ENCODE measurements at regions of chr6 and their contacts with region 1.

Region 1: GRCh38 chr6:14144678-14145113 is 27.1 kb downstream of the CD83 start:
- DNase-seq: peak; percentile 45 to 76 (median 62)
- ATAC-seq: peak; percentile 91
- H3K4me3 ChIP-seq: no peak overlapping the region
- H3K4me3 Mint-ChIP-seq: no peak overlapping the region
- H3K27ac ChIP-seq: no peak overlapping the region
- H3K27ac Mint-ChIP-seq: no peak overlapping the region
- H3K4me1 ChIP-seq: no peaks in the 10 kb centered on the region
- H3K4me1 Mint-ChIP-seq: peaks cover 0 to 12% (median 2%) of the 10 kb centered on the region in 7 donors
- H3K27me3 ChIP-seq: no peaks in the 10 kb centered on the region
- H3K27me3 Mint-ChIP-seq: no peaks in the 10 kb centered on the region

Region 2: GRCh38 chr6:13873285-13874190 is 271.2 kb before region 1 on chr6:
- CTCF ChIA-PET with region 1: interaction called, 3 read pairs
- POLR2A ChIA-PET with region 1: no interaction called
- intact Hi-C with region 1: loop called in 1 of 2 experiments (anchors 1 kb)
- DNase-seq: peak; percentile 41 to 75 (median 66)
- ATAC-seq: peak; percentile 88
- H3K4me3 ChIP-seq: peak overlapping the region; percentile 59
- H3K4me3 Mint-ChIP-seq: peak overlapping the region; percentile 76 to 92 (median 85)
- H3K27ac ChIP-seq: peak overlapping the region; percentile 2
- H3K27ac Mint-ChIP-seq: peak overlapping the region in 5 of 9 donors; percentile 3 to 60 (median 38)
- H3K4me1 ChIP-seq: peaks cover 0 to 4% of the 10 kb centered on the region in 2 donors
- H3K4me1 Mint-ChIP-seq: peaks cover 9 to 20% (median 17%) of the 10 kb centered on the region in 7 donors
- H3K27me3 ChIP-seq: no peaks in the 10 kb centered on the region
- H3K27me3 Mint-ChIP-seq: peaks cover 2 to 14% (median 7%) of the 10 kb centered on the region in 5 donors

Region 3: DNA sequence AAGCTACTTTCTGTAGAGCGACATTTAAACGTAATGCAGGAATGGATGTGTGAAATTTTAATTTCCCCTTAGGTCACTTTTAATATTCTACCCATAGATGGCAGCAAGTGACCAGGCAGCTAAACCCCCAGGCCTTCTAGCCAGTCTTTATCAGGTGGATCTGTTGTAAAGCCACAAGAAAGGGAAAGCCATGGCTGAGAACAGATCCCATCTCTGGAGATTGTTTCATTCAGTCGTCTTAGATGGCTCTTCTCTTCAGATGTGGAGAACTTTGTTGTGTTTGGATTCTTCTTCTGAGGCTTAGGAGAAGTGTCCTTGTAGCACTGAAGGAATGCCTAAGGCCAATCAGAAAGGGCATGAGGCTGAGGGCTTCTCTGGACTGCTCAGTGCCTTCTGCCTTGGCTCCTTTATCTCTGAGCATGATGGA is 235.7 kb before region 1 on chr6:
- CTCF ChIA-PET with region 1: interaction called, 6 read pairs
- POLR2A ChIA-PET with region 1: no interaction called
- intact Hi-C with region 1: loop called in 1 of 2 experiments (anchors 1 kb)
- DNase-seq: peak in 7 of 9 donors; percentile 22 to 56 (median 36)
- ATAC-seq: peak; percentile 92
- H3K4me3 ChIP-seq: no peak overlapping the region
- H3K4me3 Mint-ChIP-seq: no peak overlapping the region
- H3K27ac ChIP-seq: no peak overlapping the region
- H3K27ac Mint-ChIP-seq: no peak overlapping the region
- H3K4me1 ChIP-seq: peaks cover 0 to 5% of the 10 kb centered on the region in 2 donors
- H3K4me1 Mint-ChIP-seq: peaks cover 0 to 8% (median 3%) of the 10 kb centered on the region in 7 donors
- H3K27me3 ChIP-seq: no peaks in the 10 kb centered on the region
- H3K27me3 Mint-ChIP-seq: peaks cover 24 to 51% (median 39%) of the 10 kb centered on the region in 5 donors

Region 4: GRCh38 chr6:14046476-14047068 is 98.1 kb before region 1 on chr6:
- CTCF ChIA-PET with region 1: no interaction called
- POLR2A ChIA-PET with region 1: no interaction called
- intact Hi-C with region 1: loop called (anchors 1 to 2 kb)
- DNase-seq: peak in 6 of 9 donors; percentile 26 to 47 (median 38)
- ATAC-seq: peak; percentile 80
- H3K4me3 ChIP-seq: no peak overlapping the region
- H3K4me3 Mint-ChIP-seq: no peak overlapping the region
- H3K27ac ChIP-seq: no peak overlapping the region
- H3K27ac Mint-ChIP-seq: peak overlapping the region in 1 of 9 donors; percentile 5
- H3K4me1 ChIP-seq: no peaks in the 10 kb centered on the region
- H3K4me1 Mint-ChIP-seq: peaks cover 0 to 4% (median 0%) of the 10 kb centered on the region in 7 donors
- H3K27me3 ChIP-seq: no peaks in the 10 kb centered on the region
- H3K27me3 Mint-ChIP-seq: peaks cover 12 to 48% (median 32%) of the 10 kb centered on the region in 5 donors

Region 5: DNA sequence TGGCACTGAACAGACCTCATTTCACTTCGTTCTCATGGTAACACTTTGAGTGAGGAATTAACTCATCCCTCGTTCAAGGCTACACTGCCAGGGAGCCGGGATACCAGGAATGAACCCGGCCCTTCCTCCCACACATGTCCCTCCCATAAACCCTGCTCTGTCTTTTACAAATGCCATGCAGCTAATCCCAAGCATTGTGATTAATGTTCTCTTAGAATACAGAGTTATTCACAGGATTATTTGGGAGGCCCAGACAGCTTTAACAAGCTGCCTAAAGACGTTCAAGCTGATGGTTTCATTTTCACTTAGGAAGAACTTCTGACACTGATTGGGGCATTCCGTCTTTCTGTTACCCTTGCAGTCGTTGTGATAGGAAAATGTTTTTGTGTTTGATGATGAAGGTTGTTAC is 69.6 kb before region 1 on chr6:
- CTCF ChIA-PET with region 1: interaction called, 3 read pairs
- POLR2A ChIA-PET with region 1: no interaction called
- intact Hi-C with region 1: loop called in 1 of 2 experiments (anchors 2 kb)
- DNase-seq: peak in 7 of 9 donors; percentile 46 to 71 (median 61)
- ATAC-seq: peak; percentile 93
- H3K4me3 ChIP-seq: peak overlapping the region; percentile 57
- H3K4me3 Mint-ChIP-seq: peak overlapping the region; percentile 72 to 92 (median 82)
- H3K27ac ChIP-seq: peak overlapping the region; percentile 84
- H3K27ac Mint-ChIP-seq: peak overlapping the region; percentile 87 to 99 (median 95)
- H3K4me1 ChIP-seq: peaks cover 5 to 7% of the 10 kb centered on the region in 2 donors
- H3K4me1 Mint-ChIP-seq: peaks cover 16 to 47% (median 27%) of the 10 kb centered on the region in 7 donors
- H3K27me3 ChIP-seq: no peaks in the 10 kb centered on the region
- H3K27me3 Mint-ChIP-seq: no peaks in the 10 kb centered on the region

Region 6: GRCh38 chr6:14129575-14129974 is 15.1 kb before region 1 on chr6:
- CTCF ChIA-PET with region 1: interaction called, 8 read pairs
- POLR2A ChIA-PET with region 1: no interaction called
- intact Hi-C with region 1: loop called in 1 of 2 experiments (anchors 1 kb)
- DNase-seq: peak in 5 of 9 donors; percentile 28 to 57 (median 45)
- ATAC-seq: peak; percentile 55
- H3K4me3 ChIP-seq: no peak overlapping the region
- H3K4me3 Mint-ChIP-seq: no peak overlapping the region
- H3K27ac ChIP-seq: no peak overlapping the region
- H3K27ac Mint-ChIP-seq: peak overlapping the region in 2 of 9 donors; percentile 12 to 51
- H3K4me1 ChIP-seq: no peaks in the 10 kb centered on the region
- H3K4me1 Mint-ChIP-seq: peaks cover 2 to 21% (median 11%) of the 10 kb centered on the region in 7 donors
- H3K27me3 ChIP-seq: no peaks in the 10 kb centered on the region
- H3K27me3 Mint-ChIP-seq: no peaks in the 10 kb centered on the region

Measured in naive thymus-derived CD4-positive, alpha-beta T cell (primary cell).